Natural killer cell (primary cell): ENCODE measurements at regions of chr3 and their contacts with region 1.

Region 1: GRCh38 chr3:46442576-46443562 is 21.8 kb downstream of the LTF start:
- DNase-seq: peak in 1 of 2 donors; percentile 72
- ATAC-seq: peak; percentile 13 to 54 (median 20)
- H3K4me3 ChIP-seq: no peak overlapping the region
- H3K4me3 Mint-ChIP-seq: no peak overlapping the region
- H3K27ac ChIP-seq: no peak overlapping the region
- H3K27ac Mint-ChIP-seq: no peak overlapping the region
- H3K4me1 ChIP-seq: peaks cover 9% of the 10 kb centered on the region
- H3K4me1 Mint-ChIP-seq: peaks cover 26% of the 10 kb centered on the region in 2 donors
- H3K27me3 ChIP-seq: no peaks in the 10 kb centered on the region
- H3K27me3 Mint-ChIP-seq: peaks cover 0 to 2% of the 10 kb centered on the region in 2 donors
- CTCF ChIP-seq: peak; percentile 69

Region 2: GRCh38 chr3:45968706-45969105 is 474.2 kb before region 1 on chr3:
- intact Hi-C with region 1: no loop called
- DNase-seq: no peak
- ATAC-seq: no peak
- H3K4me3 ChIP-seq: no peak overlapping the region
- H3K4me3 Mint-ChIP-seq: no peak overlapping the region
- H3K27ac ChIP-seq: no peak overlapping the region
- H3K27ac Mint-ChIP-seq: no peak overlapping the region
- H3K4me1 ChIP-seq: peaks cover 74% of the 10 kb centered on the region
- H3K4me1 Mint-ChIP-seq: peaks cover 5 to 38% of the 10 kb centered on the region in 2 donors
- H3K27me3 ChIP-seq: no peaks in the 10 kb centered on the region
- H3K27me3 Mint-ChIP-seq: no peaks in the 10 kb centered on the region
- CTCF ChIP-seq: no peak

Region 3: DNA sequence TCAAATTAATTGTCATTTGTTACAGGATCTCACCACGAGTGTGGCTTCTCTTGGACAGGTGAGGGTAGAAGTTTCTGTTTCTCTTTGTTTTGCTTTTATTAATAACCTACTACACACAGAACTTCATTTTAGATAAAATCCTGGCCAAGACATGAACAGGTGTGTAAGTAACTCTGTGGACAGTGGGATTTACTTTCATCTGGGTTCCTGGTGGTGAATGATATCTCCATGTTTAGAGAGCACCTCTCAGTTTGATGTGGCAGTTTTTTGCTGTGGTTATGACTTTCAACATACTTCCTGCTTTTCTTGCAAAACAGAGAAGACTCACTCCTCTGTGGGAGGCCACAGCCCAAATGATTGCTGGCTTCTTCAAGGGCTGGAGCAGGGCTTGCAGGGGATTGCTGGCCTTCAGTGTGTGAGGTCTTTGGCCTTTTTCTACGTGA is 344.5 kb before region 1 on chr3:
- intact Hi-C with region 1: loop called (anchors 5 kb)
- DNase-seq: peak in 1 of 2 donors; percentile 66
- ATAC-seq: peak; percentile 62 to 70 (median 67)
- H3K4me3 ChIP-seq: no peak overlapping the region
- H3K4me3 Mint-ChIP-seq: peak overlapping the region; percentile 78
- H3K27ac ChIP-seq: peak overlapping the region; percentile 87
- H3K27ac Mint-ChIP-seq: peak overlapping the region; percentile 94 to 99
- H3K4me1 ChIP-seq: peaks cover 85% of the 10 kb centered on the region
- H3K4me1 Mint-ChIP-seq: peaks cover 52 to 57% of the 10 kb centered on the region in 2 donors
- H3K27me3 ChIP-seq: no peaks in the 10 kb centered on the region
- H3K27me3 Mint-ChIP-seq: no peaks in the 10 kb centered on the region
- CTCF ChIP-seq: no peak

Region 4: DNA sequence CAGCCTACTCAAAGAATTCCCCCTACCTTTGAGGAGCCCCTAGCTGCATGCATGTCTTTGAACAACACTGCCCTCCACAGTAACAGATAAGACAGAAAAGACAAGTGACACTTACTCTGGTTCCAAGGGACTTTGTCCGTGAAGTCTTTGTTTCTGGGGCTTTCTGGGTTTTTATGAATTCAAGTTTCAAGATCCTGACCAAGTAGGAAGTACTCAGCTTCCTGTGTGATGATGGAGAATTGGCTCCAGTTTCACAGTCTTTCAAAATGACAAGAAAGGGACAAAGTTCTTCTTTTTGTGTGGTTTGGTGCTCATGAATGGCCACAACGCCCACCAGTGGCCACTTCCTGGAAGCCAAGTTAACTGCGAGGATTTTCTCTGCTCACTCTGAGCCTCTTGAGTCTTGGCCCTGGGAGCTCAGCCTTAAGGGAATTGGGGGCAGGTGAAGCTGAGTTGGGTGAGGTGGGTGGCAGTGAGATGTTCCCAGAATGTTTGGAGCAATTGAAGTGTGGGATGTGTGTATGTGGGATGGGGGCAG is 234.6 kb before region 1 on chr3 and contains the start of gene CCR1:
- intact Hi-C with region 1: loop called (anchors 5 kb)
- DNase-seq: peak; percentile 44 to 67
- ATAC-seq: peak; percentile 77 to 83 (median 79)
- H3K4me3 ChIP-seq: peak within 1 kb of the TSS; percentile 40
- H3K4me3 Mint-ChIP-seq: peak within 1 kb of the TSS; percentile 88
- H3K27ac ChIP-seq: peak within 1 kb of the TSS; percentile 41
- H3K27ac Mint-ChIP-seq: peak within 1 kb of the TSS; percentile 85 to 90
- H3K4me1 ChIP-seq: peaks cover 66% of the 10 kb centered on the region
- H3K4me1 Mint-ChIP-seq: peaks cover 42 to 61% of the 10 kb centered on the region in 2 donors
- H3K27me3 ChIP-seq: no peaks in the 10 kb centered on the region
- H3K27me3 Mint-ChIP-seq: no peaks in the 10 kb centered on the region
- CTCF ChIP-seq: peak; percentile 61
- total RNA-seq, gene CCR1: 2.1 to 26.0 (median 3.8) TPM